ENCODE measurements at regions of chr6 and their contacts with region 1.

Region 1: DNA sequence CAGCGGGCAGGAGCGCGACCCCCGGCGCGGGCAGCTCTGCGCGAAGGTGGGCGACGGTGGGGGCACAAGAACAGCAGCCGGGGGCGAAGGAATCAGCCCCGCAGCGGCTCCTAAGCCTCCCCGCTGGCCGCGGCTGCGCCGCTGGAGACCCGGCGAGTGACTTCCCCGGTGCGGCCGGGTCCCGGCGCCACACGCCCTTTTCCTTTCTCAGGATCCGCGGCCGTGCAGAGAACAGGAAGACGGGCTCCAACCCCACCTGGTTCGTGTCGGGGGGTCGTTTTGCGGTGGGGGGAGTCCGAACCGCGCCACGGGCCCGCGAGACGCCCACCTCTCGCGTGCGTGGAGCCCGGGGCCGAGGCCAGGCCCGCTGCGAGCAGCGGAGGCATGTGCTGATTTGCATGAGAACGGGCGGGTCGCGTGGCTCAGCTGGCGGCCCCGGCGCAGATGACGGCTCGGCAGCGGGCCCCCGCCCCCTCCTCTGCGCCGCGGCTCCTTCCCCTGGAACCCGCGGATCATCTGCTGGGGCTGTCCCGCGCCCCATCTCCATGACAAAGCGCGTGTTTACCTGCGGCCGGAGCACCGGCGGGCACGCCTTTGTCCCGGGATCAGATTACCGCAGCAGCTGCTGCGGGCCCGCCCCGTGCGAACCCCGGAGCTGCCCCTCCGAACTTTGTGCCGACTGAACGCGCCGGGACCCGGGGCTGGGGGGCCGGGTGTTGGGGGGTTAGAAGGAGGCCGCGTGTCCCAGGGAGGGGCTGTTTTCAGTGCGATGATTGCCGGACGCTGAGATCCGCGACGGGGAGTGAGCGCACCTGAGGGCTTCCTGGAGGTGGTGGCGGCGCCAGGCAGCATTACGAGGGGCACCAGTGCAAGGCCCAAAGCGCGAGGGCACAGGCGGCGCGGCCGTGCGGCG is 4.9 kb upstream of the DLL1 start:
- DNase-seq: peak; percentile 87
- ATAC-seq: peak; percentile 68
- H3K4me3 ChIP-seq: peak overlapping the region; percentile 7 to 70 (median 49)
- H3K4me3 Mint-ChIP-seq: peak overlapping the region; percentile 85
- H3K27ac ChIP-seq: no peak overlapping the region
- H3K27ac Mint-ChIP-seq: peak overlapping the region; percentile 46
- H3K4me1 ChIP-seq: peaks cover 48 to 69% of the 10 kb centered on the region in 2 donors
- H3K4me1 Mint-ChIP-seq: peaks cover 43% of the 10 kb centered on the region
- H3K27me3 ChIP-seq: peaks cover 0 to 88% (median 59%) of the 10 kb centered on the region in 4 experiments
- H3K27me3 Mint-ChIP-seq: peaks cover 71% of the 10 kb centered on the region
- CTCF ChIP-seq: no peak

Region 2: DNA sequence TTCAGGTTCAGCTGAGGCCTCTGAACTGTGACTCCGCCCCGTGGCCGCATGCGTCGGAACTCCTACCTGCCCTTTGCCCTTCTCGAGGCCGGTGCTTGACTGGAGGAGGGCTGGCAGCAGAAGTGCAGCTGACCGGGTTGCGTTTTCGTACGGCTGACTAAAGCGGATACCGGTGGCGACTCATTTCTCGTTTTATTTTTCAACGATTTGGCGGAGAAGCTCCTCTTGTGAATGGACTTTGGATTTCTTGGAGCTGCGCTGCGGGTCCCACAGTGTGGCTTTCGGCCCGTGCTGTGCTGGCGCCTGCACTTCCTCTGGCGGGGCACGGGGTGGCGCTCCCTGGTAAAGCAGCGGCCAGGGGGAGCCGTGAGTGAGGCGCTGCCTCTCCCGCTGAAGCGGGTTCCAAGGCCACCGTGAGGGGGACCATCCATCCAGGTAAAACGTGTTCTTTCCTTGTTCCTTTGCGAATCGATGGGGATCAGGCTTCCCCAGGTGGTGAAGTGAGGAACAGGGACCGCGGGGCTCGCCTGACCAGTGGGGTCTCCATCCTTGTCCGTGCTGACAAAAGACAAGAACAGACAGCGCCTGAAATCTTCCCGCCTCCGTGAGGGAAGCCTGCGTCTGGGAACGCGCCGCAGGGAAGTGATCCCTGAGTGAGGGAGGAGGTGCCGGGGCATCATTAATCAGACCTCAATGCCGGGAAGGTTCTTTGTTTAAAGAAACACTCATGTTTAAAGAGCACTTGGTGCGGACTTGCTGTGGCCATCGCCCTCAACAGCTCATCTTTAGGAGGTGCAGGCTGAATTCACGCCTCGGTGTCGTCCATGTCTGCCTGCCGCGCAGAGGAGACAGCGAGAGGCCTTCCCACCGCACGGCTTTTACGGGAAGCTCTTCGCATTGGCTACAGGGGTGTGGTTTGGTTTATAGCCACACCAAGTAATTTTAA is 505.5 kb before region 1 on chr6:
- CTCF ChIA-PET with region 1: interaction called, 6 read pairs
- POLR2A ChIA-PET with region 1: no interaction called
- intact Hi-C with region 1: loop called (anchors 5 kb)
- DNase-seq: peak; percentile 81
- ATAC-seq: peak; percentile 93
- H3K4me3 ChIP-seq: peak overlapping the region; percentile 32 to 73 (median 51)
- H3K4me3 Mint-ChIP-seq: peak overlapping the region; percentile 92
- H3K27ac ChIP-seq: no peak overlapping the region
- H3K27ac Mint-ChIP-seq: no peak overlapping the region
- H3K4me1 ChIP-seq: peaks cover 9 to 16% of the 10 kb centered on the region in 2 donors
- H3K4me1 Mint-ChIP-seq: peaks cover 14% of the 10 kb centered on the region
- H3K27me3 ChIP-seq: peaks cover 0 to 39% (median 8%) of the 10 kb centered on the region in 4 experiments
- H3K27me3 Mint-ChIP-seq: peaks cover 41% of the 10 kb centered on the region
- CTCF ChIP-seq: peak; percentile 99

Region 3: GRCh38 chr6:169950558-169950957 is 345.2 kb before region 1 on chr6:
- CTCF ChIA-PET with region 1: interaction called, 5 read pairs
- POLR2A ChIA-PET with region 1: no interaction called
- intact Hi-C with region 1: loop called (anchors 5 kb)
- DNase-seq: peak; percentile 40
- ATAC-seq: no peak
- H3K4me3 ChIP-seq: no peak overlapping the region
- H3K4me3 Mint-ChIP-seq: no peak overlapping the region
- H3K27ac ChIP-seq: no peak overlapping the region
- H3K27ac Mint-ChIP-seq: no peak overlapping the region
- H3K4me1 ChIP-seq: no peaks in the 10 kb centered on the region
- H3K4me1 Mint-ChIP-seq: peaks cover 6% of the 10 kb centered on the region
- H3K27me3 ChIP-seq: no peaks in the 10 kb centered on the region
- H3K27me3 Mint-ChIP-seq: peaks cover under 1% of the 10 kb centered on the region
- CTCF ChIP-seq: peak; percentile 36

Region 4: DNA sequence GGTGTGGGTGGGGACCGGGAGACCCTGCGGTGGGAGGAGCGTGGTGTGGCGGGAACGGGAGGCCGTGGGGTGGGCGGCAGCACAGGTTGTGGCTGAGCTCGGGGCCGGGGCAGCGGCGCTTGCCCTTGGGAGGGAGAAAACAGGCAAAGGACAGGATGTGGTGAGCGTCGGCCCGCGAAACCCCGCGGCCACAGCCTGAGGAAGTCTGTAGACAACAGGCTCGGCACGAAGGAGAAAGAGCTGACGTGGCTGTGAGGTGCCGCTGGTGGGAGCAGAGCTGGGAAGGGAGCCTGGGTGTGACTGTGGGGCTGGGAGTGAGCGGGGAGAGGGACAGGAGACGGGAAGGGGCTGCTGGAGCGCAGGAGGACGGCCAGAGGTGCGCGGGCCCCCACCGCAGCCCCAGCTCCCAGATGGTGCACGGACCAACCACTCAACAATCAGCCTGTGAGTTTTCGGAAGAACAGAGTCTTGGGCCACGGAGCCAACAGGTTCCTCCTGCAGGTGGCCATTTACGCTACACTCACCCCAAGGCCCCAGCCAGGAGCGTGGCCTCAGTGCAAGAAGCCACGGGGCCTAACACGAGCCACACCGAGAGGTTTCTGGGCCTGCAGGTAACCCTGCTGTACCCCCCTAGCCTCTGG is 207.7 kb before region 1 on chr6:
- CTCF ChIA-PET with region 1: no interaction called
- POLR2A ChIA-PET with region 1: no interaction called
- intact Hi-C with region 1: loop called (anchors 2 kb)
- DNase-seq: peak; percentile 78
- ATAC-seq: peak; percentile 55
- H3K4me3 ChIP-seq: peak overlapping the region in 4 of 5 experiments; percentile 55 to 75 (median 62)
- H3K4me3 Mint-ChIP-seq: peak overlapping the region; percentile 89
- H3K27ac ChIP-seq: peak overlapping the region; percentile 75 to 80
- H3K27ac Mint-ChIP-seq: peak overlapping the region; percentile 94
- H3K4me1 ChIP-seq: peaks cover 26 to 29% of the 10 kb centered on the region in 2 donors
- H3K4me1 Mint-ChIP-seq: peaks cover 33% of the 10 kb centered on the region
- H3K27me3 ChIP-seq: no peaks in the 10 kb centered on the region
- H3K27me3 Mint-ChIP-seq: no peaks in the 10 kb centered on the region
- CTCF ChIP-seq: no peak

Region 5: GRCh38 chr6:170306324-170307079 is 10.7 kb after region 1 on chr6 and contains the start of gene FAM120B:
- CTCF ChIA-PET with region 1: interaction called, 3 read pairs
- POLR2A ChIA-PET with region 1: interaction called, 3 read pairs
- intact Hi-C with region 1: loop called (anchors 1 kb)
- DNase-seq: peak; percentile 98
- ATAC-seq: peak; percentile 96
- H3K4me3 ChIP-seq: peak within 1 kb of the TSS; percentile 45 to 95 (median 86)
- H3K4me3 Mint-ChIP-seq: peak within 1 kb of the TSS; percentile 98
- H3K27ac ChIP-seq: peak within 1 kb of the TSS; percentile 72 to 90
- H3K27ac Mint-ChIP-seq: peak within 1 kb of the TSS; percentile 97
- H3K4me1 ChIP-seq: peaks cover 22 to 34% of the 10 kb centered on the region in 2 donors
- H3K4me1 Mint-ChIP-seq: peaks cover 49% of the 10 kb centered on the region
- H3K27me3 ChIP-seq: peaks cover 0 to 4% (median 1%) of the 10 kb centered on the region in 4 experiments
- H3K27me3 Mint-ChIP-seq: peaks cover 26% of the 10 kb centered on the region
- CTCF ChIP-seq: no peak
- total RNA-seq, gene FAM120B: 51.7 and 53.2 TPM in 2 replicates

Measured in B cell (primary cell).